Activated naive CD4-positive, alpha-beta T cell treated with anti-CD3 and anti-CD28 coated beads for 36 hours (primary cell): ENCODE measurements at regions of chr7 and their contacts with region 1.

Region 1: GRCh38 chr7:55280031-55280454 is 85.1 kb upstream of the LANCL2 start:
- DNase-seq: peak; percentile 80
- H3K4me3 Mint-ChIP-seq: no peak overlapping the region
- H3K27ac Mint-ChIP-seq: no peak overlapping the region
- H3K4me1 Mint-ChIP-seq: no peaks in the 10 kb centered on the region
- H3K27me3 Mint-ChIP-seq: no peaks in the 10 kb centered on the region

Region 2: GRCh38 chr7:55415173-55415778 is 135.2 kb after region 1 on chr7:
- CTCF ChIA-PET with region 1: interaction called, 21 read pairs
- intact Hi-C with region 1: loop called (anchors 1 kb)
- DNase-seq: peak; percentile 92
- H3K4me3 Mint-ChIP-seq: no peak overlapping the region
- H3K27ac Mint-ChIP-seq: no peak overlapping the region
- H3K4me1 Mint-ChIP-seq: peaks cover 2% of the 10 kb centered on the region
- H3K27me3 Mint-ChIP-seq: no peaks in the 10 kb centered on the region

Region 3: DNA sequence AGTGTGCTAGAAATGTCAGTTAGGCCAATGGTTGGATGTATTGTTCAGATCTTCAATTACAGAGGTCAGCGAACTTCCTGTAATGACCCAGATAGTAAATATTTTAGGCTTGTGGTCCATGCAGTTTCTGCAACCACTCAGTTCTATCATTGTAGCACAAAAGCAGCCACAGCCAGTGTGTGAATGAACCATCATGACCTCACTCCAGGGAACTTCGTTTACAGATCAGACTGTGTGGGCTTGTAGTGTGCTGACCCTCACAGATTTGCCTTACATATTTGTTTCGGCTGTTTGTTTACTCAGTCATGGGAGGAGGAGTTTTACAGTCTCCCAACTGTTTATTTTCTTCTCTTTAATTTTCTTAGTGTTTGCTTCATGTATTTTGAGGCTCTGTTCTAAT is 140.5 kb after region 1 on chr7:
- CTCF ChIA-PET with region 1: interaction called, 21 read pairs
- intact Hi-C with region 1: loop called (anchors 1 kb)
- DNase-seq: no peak
- H3K4me3 Mint-ChIP-seq: no peak overlapping the region
- H3K27ac Mint-ChIP-seq: no peak overlapping the region
- H3K4me1 Mint-ChIP-seq: no peaks in the 10 kb centered on the region
- H3K27me3 Mint-ChIP-seq: no peaks in the 10 kb centered on the region

Region 4: DNA sequence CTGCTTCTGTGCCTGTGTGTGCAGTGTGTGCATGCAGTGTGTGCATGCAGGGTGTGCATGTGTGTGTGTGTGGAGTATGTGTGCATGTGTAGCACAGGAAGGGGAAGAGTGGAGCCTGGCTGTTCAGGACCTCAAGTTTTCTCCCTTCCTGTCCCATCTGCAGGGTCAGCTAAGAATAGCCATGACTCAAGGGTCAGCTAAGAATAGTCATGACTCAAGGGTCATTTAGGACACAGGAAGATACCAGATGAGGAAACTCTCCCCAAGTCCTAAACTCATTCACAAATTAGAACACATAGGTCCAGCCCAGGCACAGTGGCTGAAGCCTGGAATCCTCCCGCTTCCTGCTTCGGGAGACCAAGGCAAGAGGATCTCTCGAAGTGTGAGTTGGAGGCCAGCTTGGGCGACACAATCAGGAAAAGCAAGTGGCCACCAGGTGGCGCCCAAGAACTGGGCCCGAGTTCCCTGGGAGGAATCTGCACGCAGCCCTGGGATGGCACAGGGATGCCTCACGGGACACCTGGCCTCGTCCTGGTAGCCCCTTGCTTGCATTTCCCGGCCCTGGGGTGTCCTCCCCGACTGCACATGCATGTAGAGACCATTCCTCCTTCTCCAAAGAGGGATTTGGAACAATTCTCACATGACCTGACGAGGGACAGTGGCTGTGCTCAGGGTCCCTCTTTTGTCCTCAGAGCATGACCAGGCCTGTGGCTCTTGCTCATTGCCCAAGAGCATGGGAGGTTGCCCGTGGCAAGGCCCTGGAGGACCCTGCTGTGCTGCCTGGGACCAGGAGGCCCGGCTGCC is 313.7 kb after region 1 on chr7:
- CTCF ChIA-PET with region 1: no interaction called
- intact Hi-C with region 1: loop called (anchors 1 kb)
- DNase-seq: peak; percentile 87
- H3K4me3 Mint-ChIP-seq: no peak overlapping the region
- H3K27ac Mint-ChIP-seq: no peak overlapping the region
- H3K4me1 Mint-ChIP-seq: peaks cover 17% of the 10 kb centered on the region
- H3K27me3 Mint-ChIP-seq: peaks cover 2% of the 10 kb centered on the region

Region 5: GRCh38 chr7:55964261-55965099 is 684.4 kb after region 1 on chr7 and contains the start of gene NIPSNAP2:
- CTCF ChIA-PET with region 1: interaction called, 3 read pairs
- intact Hi-C with region 1: loop called (anchors 10 kb)
- DNase-seq: peak; percentile 46
- H3K4me3 Mint-ChIP-seq: peak within 1 kb of the TSS; percentile 77
- H3K27ac Mint-ChIP-seq: peak within 1 kb of the TSS; percentile 79
- H3K4me1 Mint-ChIP-seq: peaks cover 36% of the 10 kb centered on the region
- H3K27me3 Mint-ChIP-seq: no peaks in the 10 kb centered on the region
- total RNA-seq, gene NIPSNAP2: 57.3 to 57.6 TPM